ENCODE measurements at regions of chr21 and their contacts with region 1.

Region 1: DNA sequence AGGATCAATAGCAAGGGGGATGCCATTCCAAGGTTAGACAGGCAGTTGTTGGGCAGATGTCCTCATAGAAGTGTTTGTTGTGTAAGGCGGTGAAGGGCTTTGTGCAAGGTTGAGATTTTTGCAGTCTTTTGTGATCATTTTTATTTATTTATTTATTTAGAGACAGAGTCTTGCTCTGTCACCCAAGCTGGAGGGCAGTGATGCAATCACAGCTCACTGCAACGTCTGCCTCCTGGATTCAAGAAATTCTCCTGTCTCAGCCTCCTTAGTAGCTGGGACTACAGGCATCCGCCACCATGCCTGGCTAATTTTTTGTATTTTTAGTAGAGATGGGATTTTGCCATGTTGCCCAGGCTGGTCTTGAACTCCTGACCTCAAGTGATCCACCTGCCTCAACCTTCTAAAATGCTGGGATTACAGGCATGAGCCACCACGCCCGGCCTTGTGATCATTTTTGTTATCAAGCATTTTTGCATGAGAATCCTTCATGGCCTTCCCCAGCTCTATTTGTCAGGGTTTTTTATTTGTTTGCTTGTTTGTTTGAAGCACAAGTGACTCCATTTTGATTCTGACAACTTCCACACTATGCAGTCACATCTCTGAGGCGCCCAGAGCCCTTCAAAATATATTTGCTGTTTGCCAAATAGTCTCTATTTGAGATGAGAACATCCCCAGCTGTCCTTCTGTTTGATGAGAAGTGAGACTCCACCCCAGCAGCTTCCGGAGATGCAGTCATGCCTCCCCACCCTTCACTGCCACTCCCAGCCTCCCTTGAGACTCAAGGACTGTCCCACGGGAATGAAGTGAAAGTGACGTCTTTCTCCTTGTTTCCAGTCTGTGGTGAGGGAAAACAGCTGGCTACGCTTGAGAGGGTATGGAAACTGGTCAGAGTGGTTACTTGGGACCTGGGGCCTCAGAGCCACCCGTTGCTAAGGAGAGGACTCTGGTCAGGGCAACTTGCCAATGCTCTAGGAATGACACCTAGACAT is 38.0 kb downstream of the TMEM50B start:
- DNase-seq: peak; percentile 77
- ATAC-seq: peak; percentile 93
- H3K4me3 ChIP-seq: peak overlapping the region in 1 of 5 experiments; percentile 38
- H3K4me3 Mint-ChIP-seq: peak overlapping the region; percentile 71
- H3K27ac ChIP-seq: peak overlapping the region; percentile 88
- H3K27ac Mint-ChIP-seq: peak overlapping the region; percentile 96
- H3K4me1 ChIP-seq: peaks cover 56 to 65% of the 10 kb centered on the region in 2 donors
- H3K4me1 Mint-ChIP-seq: peaks cover 55% of the 10 kb centered on the region
- H3K27me3 ChIP-seq: no peaks in the 10 kb centered on the region
- H3K27me3 Mint-ChIP-seq: no peaks in the 10 kb centered on the region
- CTCF ChIP-seq: no peak

Region 2: GRCh38 chr21:32940079-32941014 is 501.4 kb before region 1 on chr21:
- CTCF ChIA-PET with region 1: interaction called, 40 read pairs
- POLR2A ChIA-PET with region 1: no interaction called
- intact Hi-C with region 1: no loop called
- DNase-seq: peak; percentile 63
- ATAC-seq: no peak
- H3K4me3 ChIP-seq: no peak overlapping the region
- H3K4me3 Mint-ChIP-seq: no peak overlapping the region
- H3K27ac ChIP-seq: no peak overlapping the region
- H3K27ac Mint-ChIP-seq: no peak overlapping the region
- H3K4me1 ChIP-seq: no peaks in the 10 kb centered on the region
- H3K4me1 Mint-ChIP-seq: no peaks in the 10 kb centered on the region
- H3K27me3 ChIP-seq: peaks cover 0 to 14% (median 2%) of the 10 kb centered on the region in 4 experiments
- H3K27me3 Mint-ChIP-seq: peaks cover 24% of the 10 kb centered on the region
- CTCF ChIP-seq: peak; percentile 85

Region 3: DNA sequence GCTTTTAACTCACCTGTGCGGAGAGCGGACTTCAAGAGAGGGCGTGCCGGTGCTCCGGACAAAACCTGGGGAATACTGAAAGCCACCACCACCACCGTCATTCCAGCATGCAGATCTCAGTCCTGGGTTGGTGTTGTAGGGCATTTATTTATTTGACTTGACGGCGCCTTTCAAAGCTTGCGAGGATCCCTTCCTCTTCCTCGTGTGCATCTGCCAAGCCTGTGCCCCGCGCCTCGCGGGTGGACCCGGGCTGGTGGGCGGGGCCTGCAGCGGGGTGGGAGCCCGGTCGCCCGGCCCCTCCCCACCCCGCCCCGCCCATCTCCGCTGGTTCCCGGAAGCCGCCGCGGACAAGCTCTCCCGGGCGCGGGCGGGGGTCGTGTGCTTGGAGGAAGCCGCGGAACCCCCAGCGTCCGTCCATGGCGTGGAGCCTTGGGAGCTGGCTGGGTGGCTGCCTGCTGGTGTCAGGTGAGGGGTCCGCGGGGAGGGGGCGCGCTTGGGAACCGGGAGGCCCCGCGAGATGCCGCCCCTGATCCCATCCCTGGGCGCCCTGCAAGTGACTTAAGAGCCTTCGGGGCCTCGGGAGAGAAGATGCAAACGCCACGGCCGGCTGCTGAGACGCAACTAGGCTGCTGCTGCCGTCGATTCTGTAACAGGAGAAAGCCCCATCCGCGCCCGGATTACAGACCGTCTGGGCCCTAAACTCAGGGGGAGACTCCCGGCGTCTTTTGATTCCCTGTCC is 175.6 kb before region 1 on chr21 and contains the start of gene IL10RB:
- CTCF ChIA-PET with region 1: interaction called, 18 read pairs
- POLR2A ChIA-PET with region 1: interaction called, 5 read pairs
- intact Hi-C with region 1: loop called (anchors 1 kb)
- DNase-seq: peak; percentile 87
- ATAC-seq: peak; percentile 77
- H3K4me3 ChIP-seq: peak within 1 kb of the TSS; percentile 71 to 94 (median 88)
- H3K4me3 Mint-ChIP-seq: peak within 1 kb of the TSS; percentile 98
- H3K27ac ChIP-seq: peak within 1 kb of the TSS; percentile 82 to 91
- H3K27ac Mint-ChIP-seq: peak within 1 kb of the TSS; percentile 95
- H3K4me1 ChIP-seq: peaks cover 35 to 56% of the 10 kb centered on the region in 2 donors
- H3K4me1 Mint-ChIP-seq: peaks cover 55% of the 10 kb centered on the region
- H3K27me3 ChIP-seq: no peaks in the 10 kb centered on the region
- H3K27me3 Mint-ChIP-seq: no peaks in the 10 kb centered on the region
- CTCF ChIP-seq: no peak
- total RNA-seq, gene IL10RB: 32.5 and 35.5 TPM in 2 replicates

Region 4: DNA sequence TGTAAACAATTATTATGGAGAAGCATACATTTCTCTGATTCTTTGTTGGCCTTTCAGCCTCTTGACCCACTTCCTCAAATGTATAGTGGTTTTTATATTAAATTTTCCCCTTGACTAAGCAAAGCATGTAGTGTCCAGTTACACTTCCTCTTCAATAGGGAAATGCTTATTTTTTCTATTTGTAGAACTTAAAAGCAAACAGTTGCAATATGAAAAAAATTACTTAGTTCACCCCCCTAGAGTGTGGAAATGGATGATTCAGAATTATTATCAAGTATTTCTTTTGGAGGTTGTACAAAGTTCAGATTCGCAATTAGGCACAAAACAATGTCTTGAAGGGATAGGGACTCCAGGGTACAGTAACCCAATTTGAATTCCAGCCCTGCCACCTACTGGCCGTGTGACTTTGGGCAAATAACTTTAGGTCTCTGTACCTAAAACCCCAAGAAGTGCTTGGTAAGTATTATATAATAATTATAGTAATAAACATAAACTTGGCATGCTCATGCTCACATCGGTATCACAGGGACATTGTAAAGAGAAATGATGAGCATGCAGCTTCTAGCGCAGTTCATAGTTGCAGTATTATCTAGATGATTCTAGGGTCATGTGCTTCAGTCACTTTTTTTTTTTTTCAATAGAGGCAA is 67.2 kb before region 1 on chr21:
- CTCF ChIA-PET with region 1: interaction called, 11 read pairs
- POLR2A ChIA-PET with region 1: no interaction called
- intact Hi-C with region 1: no loop called
- DNase-seq: peak; percentile 82
- ATAC-seq: peak; percentile 79
- H3K4me3 ChIP-seq: peak overlapping the region; percentile 7 to 33 (median 26)
- H3K4me3 Mint-ChIP-seq: peak overlapping the region; percentile 76
- H3K27ac ChIP-seq: peak overlapping the region; percentile 76 to 87
- H3K27ac Mint-ChIP-seq: peak overlapping the region; percentile 89
- H3K4me1 ChIP-seq: peaks cover 83 to 91% of the 10 kb centered on the region in 2 donors
- H3K4me1 Mint-ChIP-seq: peaks cover 72% of the 10 kb centered on the region
- H3K27me3 ChIP-seq: no peaks in the 10 kb centered on the region
- H3K27me3 Mint-ChIP-seq: no peaks in the 10 kb centered on the region
- CTCF ChIP-seq: peak; percentile 51

Region 5: GRCh38 chr21:33386222-33386784 is 55.5 kb before region 1 on chr21:
- CTCF ChIA-PET with region 1: interaction called, 11 read pairs
- POLR2A ChIA-PET with region 1: interaction called, 5 read pairs
- intact Hi-C with region 1: no loop called
- DNase-seq: no peak
- ATAC-seq: no peak
- H3K4me3 ChIP-seq: no peak overlapping the region
- H3K4me3 Mint-ChIP-seq: no peak overlapping the region
- H3K27ac ChIP-seq: peak overlapping the region in 1 of 2 donors; percentile 39
- H3K27ac Mint-ChIP-seq: peak overlapping the region; percentile 53
- H3K4me1 ChIP-seq: peaks cover 42 to 66% of the 10 kb centered on the region in 2 donors
- H3K4me1 Mint-ChIP-seq: peaks cover 63% of the 10 kb centered on the region
- H3K27me3 ChIP-seq: no peaks in the 10 kb centered on the region
- H3K27me3 Mint-ChIP-seq: no peaks in the 10 kb centered on the region
- CTCF ChIP-seq: no peak

Region 6: DNA sequence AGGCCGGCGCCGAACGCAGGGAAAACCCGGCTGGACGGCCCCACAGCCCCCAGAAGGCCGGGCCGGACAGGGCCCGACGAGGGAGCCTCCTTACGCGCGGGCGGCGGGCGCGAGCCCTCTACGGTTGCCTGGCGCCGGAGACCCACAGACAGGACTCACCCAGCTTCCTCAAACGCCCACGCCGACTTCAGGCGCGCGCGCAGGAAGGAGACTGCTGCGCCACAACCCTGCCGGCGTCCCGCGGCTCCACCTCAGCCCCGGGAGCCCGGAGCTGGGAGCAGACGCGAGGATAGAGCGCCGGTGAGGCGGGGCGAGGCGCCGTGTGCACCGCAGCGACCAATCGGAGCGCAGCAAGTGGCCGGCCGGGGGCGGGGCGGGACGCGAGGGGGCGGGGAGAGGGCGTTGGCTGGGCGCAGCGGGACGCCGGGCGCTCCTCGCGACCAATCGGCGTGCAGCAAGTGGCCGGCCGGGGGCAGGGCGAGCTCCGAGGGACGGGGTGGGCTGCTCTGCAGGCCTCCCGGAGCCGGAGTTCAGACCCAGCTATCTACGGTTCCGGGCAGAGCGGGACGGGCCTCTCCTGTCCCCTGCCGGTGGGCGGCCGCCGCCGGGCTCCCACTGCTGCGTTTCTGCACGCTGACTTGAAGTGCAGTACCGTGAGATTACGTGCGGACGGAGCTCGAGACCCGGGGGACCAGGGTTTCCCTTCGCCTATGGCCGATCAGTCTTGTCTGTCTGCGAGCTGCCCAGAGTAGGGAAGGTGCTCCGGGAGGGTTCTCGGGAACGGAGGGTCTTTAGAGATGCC is 38.1 kb after region 1 on chr21 and contains the start of gene TMEM50B:
- CTCF ChIA-PET with region 1: interaction called, 13 read pairs
- POLR2A ChIA-PET with region 1: interaction called, 4 read pairs
- intact Hi-C with region 1: no loop called
- DNase-seq: peak; percentile 96
- ATAC-seq: peak; percentile 85
- H3K4me3 ChIP-seq: peak within 1 kb of the TSS; percentile 70 to 91 (median 78)
- H3K4me3 Mint-ChIP-seq: peak within 1 kb of the TSS; percentile 94
- H3K27ac ChIP-seq: peak within 1 kb of the TSS; percentile 56 to 95
- H3K27ac Mint-ChIP-seq: peak within 1 kb of the TSS; percentile 95
- H3K4me1 ChIP-seq: peaks cover 12 to 14% of the 10 kb centered on the region in 2 donors
- H3K4me1 Mint-ChIP-seq: peaks cover 17% of the 10 kb centered on the region
- H3K27me3 ChIP-seq: no peaks in the 10 kb centered on the region
- H3K27me3 Mint-ChIP-seq: no peaks in the 10 kb centered on the region
- CTCF ChIP-seq: peak; percentile 40
- total RNA-seq, gene TMEM50B: 79.0 and 79.5 TPM in 2 replicates

Region 7: DNA sequence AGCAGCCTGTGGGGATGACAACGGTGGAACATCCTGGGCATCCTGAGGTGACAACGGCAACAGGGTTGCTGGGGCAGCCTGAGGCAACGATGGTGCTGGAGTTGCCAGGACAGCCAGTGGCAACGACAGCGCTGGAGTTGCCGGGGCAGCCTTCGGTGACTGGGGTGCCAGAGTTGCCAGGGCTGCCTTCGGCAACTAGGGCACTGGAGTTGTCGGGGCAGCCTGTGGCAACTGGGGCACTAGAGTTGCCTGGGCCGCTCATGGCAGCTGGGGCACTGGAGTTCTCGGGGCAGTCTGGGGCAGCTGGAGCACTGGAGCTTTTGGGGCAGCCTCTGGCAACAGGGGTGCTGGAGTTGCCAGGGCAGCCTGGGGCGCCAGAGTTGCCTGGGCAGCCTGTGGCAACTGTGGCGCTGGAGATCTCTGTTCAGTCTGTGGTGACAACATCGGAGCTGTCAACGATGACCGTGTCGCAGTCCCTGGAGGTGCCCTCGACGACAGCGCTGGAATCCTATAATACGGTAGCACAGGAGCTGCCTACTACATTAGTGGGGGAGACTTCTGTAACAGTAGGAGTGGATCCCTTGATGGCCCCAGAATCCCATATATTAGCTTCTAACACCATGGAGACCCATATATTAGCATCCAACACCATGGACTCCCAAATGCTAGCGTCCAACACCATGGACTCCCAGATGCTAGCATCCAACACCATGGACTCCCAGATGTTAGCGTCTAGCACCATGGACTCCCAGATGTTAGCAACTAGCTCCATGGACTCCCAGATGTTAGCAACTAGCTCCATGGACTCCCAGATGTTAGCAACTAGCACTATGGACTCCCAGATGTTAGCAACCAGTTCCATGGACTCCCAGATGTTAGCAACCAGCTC is 109.2 kb after region 1 on chr21:
- CTCF ChIA-PET with region 1: no interaction called
- POLR2A ChIA-PET with region 1: no interaction called
- intact Hi-C with region 1: no loop called
- DNase-seq: no peak
- ATAC-seq: no peak
- H3K4me3 ChIP-seq: no peak overlapping the region
- H3K4me3 Mint-ChIP-seq: no peak overlapping the region
- H3K27ac ChIP-seq: no peak overlapping the region
- H3K27ac Mint-ChIP-seq: no peak overlapping the region
- H3K4me1 ChIP-seq: peaks cover 0 to 6% of the 10 kb centered on the region in 2 donors
- H3K4me1 Mint-ChIP-seq: peaks cover 24% of the 10 kb centered on the region
- H3K27me3 ChIP-seq: no peaks in the 10 kb centered on the region
- H3K27me3 Mint-ChIP-seq: no peaks in the 10 kb centered on the region
- CTCF ChIP-seq: no peak